ENCODE measurements at regions of chr19 and their contacts with region 1.

Region 1: DNA sequence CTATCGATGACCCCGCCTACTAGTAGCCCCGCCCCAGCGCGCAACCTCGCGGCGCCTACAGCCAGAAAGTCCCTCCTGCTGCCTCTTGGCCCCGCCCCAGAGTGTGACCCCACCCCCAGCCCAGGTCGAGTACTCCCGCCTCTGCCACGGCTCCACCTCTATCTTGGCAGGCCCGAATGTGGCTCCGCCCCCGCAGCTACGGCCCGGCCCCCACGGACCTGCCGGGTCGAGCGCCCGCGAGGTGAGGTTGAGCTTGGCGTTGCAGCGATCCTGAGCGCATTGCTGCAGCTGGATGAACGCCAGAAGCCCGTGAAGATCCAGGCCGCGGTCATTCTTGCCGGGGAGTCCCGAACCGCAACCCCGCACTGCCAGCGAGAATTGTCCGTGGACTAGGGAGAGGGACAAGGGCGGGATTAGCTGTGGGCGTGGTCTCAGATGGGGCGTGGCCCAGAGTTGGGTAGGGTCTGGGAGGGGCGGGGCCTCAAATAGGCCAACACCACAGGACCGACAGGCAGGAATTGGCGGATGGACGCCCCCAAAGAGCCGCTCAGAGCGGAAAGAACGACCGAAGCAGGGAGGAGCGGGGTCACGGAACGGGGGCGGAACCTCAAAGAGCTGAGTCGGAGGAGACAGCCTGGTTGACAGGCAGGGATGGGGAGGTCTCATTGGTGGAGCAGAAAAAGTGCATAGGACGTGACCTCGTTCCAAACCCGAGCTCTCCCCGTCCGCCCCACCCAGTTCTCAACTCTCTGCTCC is 1.8 kb downstream of the LYPD3 start:
- DNase-seq: peak; percentile 99
- ATAC-seq: peak; percentile 88
- H3K4me3 Mint-ChIP-seq: peak overlapping the region; percentile 85
- H3K27ac Mint-ChIP-seq: peak overlapping the region; percentile 96
- H3K4me1 Mint-ChIP-seq: peaks cover 44% of the 10 kb centered on the region
- H3K27me3 Mint-ChIP-seq: no peaks in the 10 kb centered on the region

Region 2: DNA sequence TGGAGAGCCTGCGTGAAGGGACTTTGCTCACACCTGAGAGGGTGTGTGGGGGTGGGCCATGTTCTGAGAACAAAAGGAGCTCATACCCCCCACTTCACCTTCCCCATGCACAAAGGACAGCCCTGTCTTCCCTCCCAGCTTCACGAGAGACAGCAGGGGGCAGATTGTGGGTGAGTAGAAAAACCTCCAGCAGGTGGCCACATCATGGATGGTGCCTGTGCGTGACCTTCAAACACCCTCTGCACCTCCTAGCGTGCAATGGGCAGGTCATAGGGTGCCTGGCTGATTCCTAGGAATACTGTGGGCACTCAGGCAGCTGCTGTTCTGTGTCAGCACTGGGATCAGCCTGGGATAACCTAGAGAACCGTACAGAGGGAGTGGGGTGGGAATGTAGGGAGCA is 157.9 kb before region 1 on chr19:
- CTCF ChIA-PET with region 1: no interaction called
- POLR2A ChIA-PET with region 1: no interaction called
- DNase-seq: no peak
- ATAC-seq: no peak
- H3K4me3 Mint-ChIP-seq: no peak overlapping the region
- H3K27ac Mint-ChIP-seq: no peak overlapping the region
- H3K4me1 Mint-ChIP-seq: no peaks in the 10 kb centered on the region
- H3K27me3 Mint-ChIP-seq: peaks cover 2% of the 10 kb centered on the region

Region 3: DNA sequence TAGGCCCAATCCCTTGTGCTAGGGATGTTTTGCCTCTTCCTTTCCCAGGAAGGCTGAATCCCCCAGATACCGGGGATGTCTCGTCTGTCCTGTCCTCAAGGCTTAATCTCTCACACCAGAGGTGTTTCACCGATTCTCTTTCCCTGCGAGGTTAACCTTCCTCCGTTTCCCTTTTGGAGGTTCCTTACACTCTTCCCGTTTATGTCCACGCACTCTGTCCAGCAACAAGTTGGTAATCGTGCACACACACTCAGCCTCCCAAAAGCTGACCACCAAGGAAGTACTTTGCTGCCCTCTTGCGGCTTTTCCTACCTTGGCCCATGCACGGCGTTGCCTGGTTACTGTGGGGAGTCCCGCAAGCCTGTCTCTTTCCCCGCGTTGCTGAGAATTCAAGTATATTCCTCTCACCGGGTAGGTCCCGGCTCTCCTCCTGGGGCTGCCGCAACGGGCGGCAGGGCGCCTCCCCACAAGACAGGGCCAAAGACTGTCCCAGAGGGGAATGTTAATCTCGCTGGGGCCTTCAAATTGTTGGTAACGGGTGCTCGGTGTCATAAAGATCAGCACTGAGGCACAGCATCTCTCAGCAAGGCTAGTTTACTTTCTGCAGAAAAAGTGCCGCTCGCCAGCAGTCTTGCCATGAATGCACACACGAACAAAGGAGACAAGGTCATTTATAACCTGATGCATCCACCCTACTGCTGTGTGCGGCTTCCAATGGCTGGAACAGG is 146.8 kb before region 1 on chr19:
- CTCF ChIA-PET with region 1: no interaction called
- POLR2A ChIA-PET with region 1: no interaction called
- DNase-seq: no peak
- ATAC-seq: no peak
- H3K4me3 Mint-ChIP-seq: no peak overlapping the region
- H3K27ac Mint-ChIP-seq: no peak overlapping the region
- H3K4me1 Mint-ChIP-seq: no peaks in the 10 kb centered on the region
- H3K27me3 Mint-ChIP-seq: peaks cover 2% of the 10 kb centered on the region

Region 4: DNA sequence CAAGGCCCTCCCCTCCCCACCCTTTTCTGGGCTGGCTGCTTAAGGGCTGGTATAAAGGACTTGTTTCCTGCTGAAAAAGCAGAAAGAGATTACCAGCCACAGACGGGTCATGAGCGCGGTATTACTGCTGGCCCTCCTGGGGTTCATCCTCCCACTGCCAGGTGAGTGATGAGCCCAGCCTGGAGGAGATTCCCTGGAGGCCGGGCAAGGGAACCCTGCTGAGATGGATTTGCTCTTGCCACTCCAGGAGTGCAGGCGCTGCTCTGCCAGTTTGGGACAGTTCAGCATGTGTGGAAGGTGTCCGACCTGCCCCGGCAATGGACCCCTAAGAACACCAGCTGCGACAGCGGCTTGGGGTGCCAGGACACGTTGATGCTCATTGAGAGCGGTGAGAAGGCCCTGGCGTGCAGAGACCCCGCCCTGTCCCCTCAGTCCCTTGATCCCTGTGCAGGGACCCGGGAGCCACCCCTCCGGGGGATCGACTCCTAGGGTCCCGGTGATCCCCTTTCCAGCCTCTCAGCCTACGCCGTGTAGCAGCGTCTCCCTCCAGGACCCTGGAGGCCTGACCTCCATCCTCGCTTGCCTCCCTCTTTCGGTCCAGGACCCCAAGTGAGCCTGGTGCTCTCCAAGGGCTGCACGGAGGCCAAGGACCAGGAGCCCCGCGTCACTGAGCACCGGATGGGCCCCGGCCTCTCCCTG is 109.8 kb before region 1 on chr19 and contains the start of gene CD177:
- CTCF ChIA-PET with region 1: no interaction called
- POLR2A ChIA-PET with region 1: no interaction called
- DNase-seq: no peak
- ATAC-seq: no peak
- H3K4me3 Mint-ChIP-seq: no peak within 1 kb of the TSS
- H3K27ac Mint-ChIP-seq: no peak within 1 kb of the TSS
- H3K4me1 Mint-ChIP-seq: no peaks in the 10 kb centered on the region
- H3K27me3 Mint-ChIP-seq: no peaks in the 10 kb centered on the region
- total RNA-seq, gene CD177: not detected

Region 5: DNA sequence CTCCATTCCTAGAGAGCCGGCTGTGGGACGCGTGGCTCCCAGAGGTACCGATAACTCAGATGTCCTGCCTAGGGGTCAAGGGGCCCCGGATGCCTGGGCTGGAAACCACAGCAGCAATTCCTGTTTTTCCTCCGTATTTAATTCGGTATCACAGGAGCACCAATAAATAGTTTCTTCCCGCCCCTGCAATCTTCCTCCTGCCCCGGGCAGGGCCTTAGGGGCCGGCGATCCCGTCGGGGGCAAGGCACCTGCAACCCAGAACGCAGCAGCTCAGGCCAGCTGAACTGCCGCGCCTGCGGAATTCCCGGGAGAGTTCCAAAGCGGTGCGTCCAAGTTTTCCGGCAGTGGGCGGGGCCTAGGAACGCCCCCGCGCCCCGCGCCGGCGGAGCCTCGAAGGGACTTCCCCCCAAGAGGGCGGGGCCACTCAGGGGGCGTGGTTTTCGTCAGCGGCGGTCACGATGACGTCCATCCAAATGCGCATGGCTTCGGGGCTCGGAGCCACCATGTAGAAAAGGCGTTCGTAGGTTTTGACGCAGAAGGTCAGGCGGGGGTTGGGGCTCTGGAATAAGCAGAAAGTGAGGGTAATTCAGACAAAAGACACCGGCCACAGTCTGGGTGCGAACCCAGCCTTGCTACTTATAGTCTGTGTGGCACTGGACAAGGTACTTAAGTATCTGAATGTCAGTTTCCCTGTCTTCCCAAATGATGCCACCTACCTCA is 11.6 kb after region 1 on chr19:
- CTCF ChIA-PET with region 1: interaction called, 10 read pairs
- POLR2A ChIA-PET with region 1: interaction called, 9 read pairs
- DNase-seq: peak; percentile 93
- ATAC-seq: peak; percentile 91
- H3K4me3 Mint-ChIP-seq: peak overlapping the region; percentile 72
- H3K27ac Mint-ChIP-seq: peak overlapping the region; percentile 82
- H3K4me1 Mint-ChIP-seq: peaks cover 15% of the 10 kb centered on the region
- H3K27me3 Mint-ChIP-seq: no peaks in the 10 kb centered on the region

Region 6: DNA sequence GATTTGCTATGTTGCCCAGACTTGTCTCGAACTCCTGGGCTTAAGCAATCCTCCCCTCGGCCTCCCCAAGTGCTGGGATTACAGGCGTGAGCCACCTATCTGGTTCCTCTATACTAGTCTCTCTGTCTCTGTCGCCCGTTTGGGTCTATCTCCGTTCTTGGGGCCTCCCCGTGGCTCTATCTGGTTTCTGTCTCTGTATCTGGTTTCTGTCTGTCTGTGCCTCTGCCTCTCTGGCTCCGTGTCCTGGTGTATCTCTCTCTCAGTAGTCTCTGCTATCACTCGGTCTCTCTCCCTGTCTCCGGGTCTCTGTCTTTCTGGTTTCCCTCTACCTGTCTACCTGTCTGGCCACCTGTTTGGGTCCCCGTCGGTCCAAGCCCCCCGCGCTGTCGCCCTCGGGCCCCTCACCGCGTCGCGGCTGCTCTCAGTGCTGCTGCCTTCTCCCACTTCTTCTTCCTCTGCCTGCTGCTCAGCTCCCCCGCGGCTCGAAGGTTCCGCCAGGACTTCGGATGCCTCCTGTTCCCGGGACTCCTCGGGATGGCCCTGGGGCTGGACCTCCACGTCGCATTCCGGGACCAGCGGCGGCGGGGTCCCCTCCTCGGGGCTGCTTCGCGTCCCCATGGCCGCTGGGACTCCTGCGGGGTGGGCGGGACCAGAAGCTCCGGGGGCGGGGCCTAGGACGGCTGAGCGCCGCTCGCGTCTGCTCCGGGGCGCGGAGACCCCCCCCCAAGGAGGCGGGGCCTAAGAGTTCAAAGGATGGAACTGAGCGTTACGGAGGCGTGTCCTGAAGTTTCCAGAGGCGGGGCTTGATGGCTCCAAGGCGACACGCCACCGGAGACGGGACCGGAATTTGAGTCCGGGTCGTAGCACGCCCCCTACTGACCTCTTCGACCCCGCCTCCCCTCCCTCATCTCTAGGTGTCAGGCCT is 40.2 kb after region 1 on chr19:
- CTCF ChIA-PET with region 1: interaction called, 15 read pairs
- POLR2A ChIA-PET with region 1: interaction called, 18 read pairs
- DNase-seq: peak; percentile 98
- ATAC-seq: peak; percentile 95
- H3K4me3 Mint-ChIP-seq: peak overlapping the region; percentile 88
- H3K27ac Mint-ChIP-seq: peak overlapping the region; percentile 97
- H3K4me1 Mint-ChIP-seq: peaks cover 27% of the 10 kb centered on the region
- H3K27me3 Mint-ChIP-seq: no peaks in the 10 kb centered on the region

Region 7: GRCh38 chr19:43526884-43527859 is 63.6 kb after region 1 on chr19 and contains the start of gene ETHE1:
- CTCF ChIA-PET with region 1: interaction called, 12 read pairs
- POLR2A ChIA-PET with region 1: interaction called, 6 read pairs
- DNase-seq: peak; percentile 83
- ATAC-seq: peak; percentile 92
- H3K4me3 Mint-ChIP-seq: peak within 1 kb of the TSS; percentile 95
- H3K27ac Mint-ChIP-seq: peak within 1 kb of the TSS; percentile 68
- H3K4me1 Mint-ChIP-seq: peaks cover 29% of the 10 kb centered on the region
- H3K27me3 Mint-ChIP-seq: no peaks in the 10 kb centered on the region
- total RNA-seq, gene ETHE1: 67.9 to 69.1 TPM